K562 (cell line): ENCODE measurements at regions of chr2 and their contacts with region 1.

Region 1: DNA sequence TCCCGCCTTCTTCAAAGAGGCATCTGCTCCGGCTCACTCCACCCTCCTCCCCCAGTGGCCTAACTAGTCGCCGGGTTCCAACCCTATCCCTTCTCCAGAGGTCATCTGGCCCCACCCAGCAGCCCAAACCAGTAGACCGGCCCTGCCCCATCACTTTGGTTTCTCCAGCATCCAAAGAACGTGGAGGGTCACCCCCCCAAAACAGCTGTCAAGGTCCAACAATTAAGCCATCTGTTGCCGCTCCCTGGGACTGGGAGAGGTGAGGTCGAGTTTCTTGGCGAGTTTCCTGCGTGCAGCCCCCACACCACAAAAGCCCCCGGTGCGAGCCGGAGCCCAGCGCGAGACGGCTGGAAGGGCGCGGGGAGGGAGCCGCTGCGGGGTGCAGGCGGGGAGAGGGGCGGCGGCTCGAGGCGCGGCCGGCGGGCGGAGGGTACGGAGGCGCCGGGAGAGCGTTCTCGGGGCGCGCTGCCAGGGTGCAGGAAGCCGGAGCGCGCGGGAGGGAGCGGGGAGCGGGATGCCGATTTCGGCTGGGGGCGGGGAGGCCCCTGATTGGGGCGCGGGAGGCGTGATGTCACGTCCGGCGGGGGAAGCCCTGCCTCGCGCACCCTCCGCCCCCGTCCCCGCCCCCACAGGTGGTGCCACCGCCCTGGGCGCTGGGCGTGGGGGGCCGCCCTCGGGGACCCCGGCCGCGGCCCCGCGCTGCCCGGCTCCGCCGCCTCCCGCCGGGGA is 571 bp upstream of the GPC1 start:
- DNase-seq: peak; percentile 80 to 93 (median 92)
- ATAC-seq: peak; percentile 76
- H3K4me3 ChIP-seq: peak overlapping the region; percentile 36
- H3K27ac ChIP-seq: no peak overlapping the region
- H3K4me1 ChIP-seq: peaks cover 0 to 33% of the 10 kb centered on the region in 2 experiments; a peak in 3 of 5 replicates
- H3K27me3 ChIP-seq: peaks cover 6 to 40% of the 10 kb centered on the region in 2 experiments; a peak in 4 of 5 replicates
- CTCF ChIP-seq: no peak
- EP300 ChIP-seq: no peak
- POLR2A ChIP-seq: no peak
- RAD21 ChIP-seq: no peak

Region 2: GRCh38 chr2:240149943-240150784 is 284.7 kb before region 1 on chr2:
- CTCF ChIA-PET with region 1: interaction called, 7 read pairs
- POLR2A ChIA-PET with region 1: no interaction called
- in situ Hi-C with region 1: no loop called
- intact Hi-C with region 1: loop called (anchors 2 kb)
- DNase-seq: peak; percentile 37 to 67 (median 64)
- ATAC-seq: peak; percentile 88
- H3K4me3 ChIP-seq: no peak overlapping the region
- H3K27ac ChIP-seq: no peak overlapping the region
- H3K4me1 ChIP-seq: no peaks in the 10 kb centered on the region; a peak in 1 of 5 replicates
- H3K27me3 ChIP-seq: peaks cover 0 to 15% of the 10 kb centered on the region in 2 experiments; a peak in 2 of 5 replicates
- CTCF ChIP-seq: peak; percentile 63 to 71 (median 68)
- EP300 ChIP-seq: no peak
- POLR2A ChIP-seq: no peak
- RAD21 ChIP-seq: peak; percentile 22 to 65; a peak in 3 of 4 replicates

Region 3: GRCh38 chr2:240232961-240233893 is 201.7 kb before region 1 on chr2:
- CTCF ChIA-PET with region 1: interaction called, 24 read pairs
- POLR2A ChIA-PET with region 1: no interaction called
- in situ Hi-C with region 1: loop called (anchors 5 kb)
- intact Hi-C with region 1: loop called (anchors 1 kb)
- DNase-seq: peak; percentile 87 to 95 (median 92)
- ATAC-seq: peak; percentile 94
- H3K4me3 ChIP-seq: peak overlapping the region; percentile 31
- H3K27ac ChIP-seq: no peak overlapping the region
- H3K4me1 ChIP-seq: peaks cover 0 to 25% of the 10 kb centered on the region in 2 experiments; a peak in 3 of 5 replicates
- H3K27me3 ChIP-seq: peaks cover 0 to 14% of the 10 kb centered on the region in 2 experiments; a peak in 2 of 5 replicates
- CTCF ChIP-seq: peak; percentile 70 to 83 (median 73); a peak in 5 of 6 replicates
- EP300 ChIP-seq: no peak
- POLR2A ChIP-seq: no peak
- RAD21 ChIP-seq: peak; percentile 73 to 85